ENCODE measurements at regions of chr4 and their contacts with region 1.

Region 1: GRCh38 chr4:122309988-122310626 is 68.7 kb upstream of the ADAD1 start:
- DNase-seq: no peak
- ATAC-seq: no peak
- H3K4me3 ChIP-seq: no peak overlapping the region
- H3K27ac ChIP-seq: no peak overlapping the region
- H3K4me1 ChIP-seq: no peaks in the 10 kb centered on the region
- H3K27me3 ChIP-seq: no peaks in the 10 kb centered on the region
- CTCF ChIP-seq: peak; percentile 45; the same call in 1 of the 2 replicates

Region 2: GRCh38 chr4:122346036-122346435 is 35.9 kb after region 1 on chr4:
- CTCF ChIA-PET with region 1: no interaction called
- POLR2A ChIA-PET with region 1: no interaction called
- in situ Hi-C with region 1: no loop called
- intact Hi-C with region 1: no loop called
- DNase-seq: no peak
- ATAC-seq: no peak
- H3K4me3 ChIP-seq: no peak overlapping the region
- H3K27ac ChIP-seq: no peak overlapping the region
- H3K4me1 ChIP-seq: no peaks in the 10 kb centered on the region
- H3K27me3 ChIP-seq: no peaks in the 10 kb centered on the region
- CTCF ChIP-seq: no peak

Region 3: DNA sequence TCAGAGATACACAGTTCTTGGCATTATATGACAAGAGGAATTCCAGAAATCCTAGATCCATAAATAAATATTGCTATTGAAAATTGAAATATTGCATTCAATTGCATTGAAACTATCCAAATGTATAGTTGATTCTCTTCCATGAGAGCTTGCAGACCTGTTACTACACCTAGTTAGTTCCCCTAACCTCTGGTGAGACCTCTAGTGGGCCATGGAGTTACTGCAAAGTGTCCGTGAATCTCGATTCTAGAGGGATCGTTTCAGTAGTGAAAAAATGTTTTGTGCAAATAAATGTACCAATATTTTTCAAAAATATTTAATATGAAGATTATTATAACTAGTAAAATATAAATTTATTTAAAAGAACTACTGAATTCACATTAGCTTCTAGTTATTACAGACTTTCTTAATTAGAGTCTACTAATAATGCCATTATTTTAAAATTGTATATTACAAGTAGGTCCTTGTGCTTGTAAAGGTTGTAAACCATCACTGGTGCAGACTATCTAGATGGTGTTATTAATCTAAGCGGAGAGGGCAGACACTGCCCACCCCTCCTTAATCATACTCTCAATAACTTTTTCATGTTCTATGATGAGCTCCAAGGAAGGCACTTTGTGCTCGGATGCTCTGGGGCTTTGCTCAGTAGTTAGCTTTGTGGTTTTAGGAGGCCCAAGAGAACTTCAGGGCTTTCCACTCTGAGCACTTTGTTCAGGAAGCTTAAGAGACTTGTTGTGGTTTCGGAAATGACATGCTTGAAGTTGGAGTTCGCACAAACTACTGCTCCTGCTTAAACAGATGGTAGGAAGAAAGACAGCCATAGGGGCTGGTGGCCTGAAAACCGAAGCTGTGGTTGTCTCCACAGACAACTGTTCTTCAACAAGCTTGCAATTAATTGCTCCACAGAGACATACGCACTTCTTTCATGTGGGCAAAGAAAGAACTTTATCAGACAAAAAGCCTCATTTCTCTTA is 268.0 kb after region 1 on chr4:
- CTCF ChIA-PET with region 1: no interaction called
- POLR2A ChIA-PET with region 1: no interaction called
- in situ Hi-C with region 1: no loop called
- intact Hi-C with region 1: loop called (anchors 5 kb)
- DNase-seq: no peak
- ATAC-seq: peak; percentile 75; the same call in 1 of the 2 replicates
- H3K4me3 ChIP-seq: no peak overlapping the region
- H3K27ac ChIP-seq: no peak overlapping the region
- H3K4me1 ChIP-seq: no peaks in the 10 kb centered on the region
- H3K27me3 ChIP-seq: no peaks in the 10 kb centered on the region
- CTCF ChIP-seq: peak; percentile 64; the same call in 1 of the 2 replicates

Region 4: DNA sequence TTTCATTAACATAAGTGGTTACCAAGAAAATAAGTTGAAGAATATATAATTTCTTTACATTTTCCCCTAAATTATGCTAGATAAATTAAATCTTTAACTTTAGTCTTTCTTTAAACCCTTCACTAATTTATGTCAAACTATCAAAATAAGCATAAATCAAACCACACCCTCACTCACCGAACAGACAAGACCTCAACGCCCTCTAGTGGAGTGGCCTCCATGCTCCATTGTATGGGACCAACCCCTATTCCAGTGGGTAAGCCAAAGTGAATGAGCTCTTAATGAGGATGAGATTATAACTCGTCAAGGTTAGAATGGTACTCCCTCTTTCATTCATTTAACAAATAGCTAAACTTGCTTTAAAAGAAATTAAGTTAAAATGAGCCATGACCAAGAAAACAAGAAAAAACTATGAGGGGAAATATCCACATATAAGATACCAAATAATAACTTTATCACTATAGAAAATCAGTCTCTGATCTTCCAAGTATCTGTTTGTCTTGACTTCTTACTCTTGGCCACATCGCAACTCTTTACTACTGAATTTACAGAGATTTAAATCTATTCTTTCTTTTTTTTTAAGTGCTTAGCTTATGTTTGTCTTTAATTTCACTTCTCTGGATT is 406.8 kb after region 1 on chr4:
- CTCF ChIA-PET with region 1: no interaction called
- POLR2A ChIA-PET with region 1: no interaction called
- in situ Hi-C with region 1: no loop called
- intact Hi-C with region 1: loop called (anchors 10 kb)
- DNase-seq: peak; percentile 42
- ATAC-seq: peak; percentile 90
- H3K4me3 ChIP-seq: no peak overlapping the region
- H3K27ac ChIP-seq: no peak overlapping the region
- H3K4me1 ChIP-seq: no peaks in the 10 kb centered on the region
- H3K27me3 ChIP-seq: no peaks in the 10 kb centered on the region
- CTCF ChIP-seq: peak; percentile 85

Measured in Panc1 (cell line).